Activated CD8-positive, alpha-beta memory T cell treated with anti-CD3 and anti-CD28 coated beads, Interleukin-2, amount 10 ng/mL, durations not matched to agents 7 days and 5 days (primary cell): ENCODE measurements at regions of chr11 and their contacts with region 1.

Region 1: GRCh38 chr11:11036848-11037732 is 179.2 kb upstream of the ZBED5 start:
- DNase-seq: no peak
- ATAC-seq: peak; percentile 70
- H3K4me3 Mint-ChIP-seq: no peak overlapping the region
- H3K27ac Mint-ChIP-seq: no peak overlapping the region
- H3K4me1 Mint-ChIP-seq: no peaks in the 10 kb centered on the region
- H3K27me3 Mint-ChIP-seq: peaks cover 11% of the 10 kb centered on the region

Region 2: GRCh38 chr11:11069841-11070835 is 33.0 kb after region 1 on chr11:
- CTCF ChIA-PET with region 1: no interaction called
- DNase-seq: no peak
- ATAC-seq: no peak
- H3K4me3 Mint-ChIP-seq: no peak overlapping the region
- H3K27ac Mint-ChIP-seq: no peak overlapping the region
- H3K4me1 Mint-ChIP-seq: no peaks in the 10 kb centered on the region
- H3K27me3 Mint-ChIP-seq: peaks cover 2% of the 10 kb centered on the region

Region 3: DNA sequence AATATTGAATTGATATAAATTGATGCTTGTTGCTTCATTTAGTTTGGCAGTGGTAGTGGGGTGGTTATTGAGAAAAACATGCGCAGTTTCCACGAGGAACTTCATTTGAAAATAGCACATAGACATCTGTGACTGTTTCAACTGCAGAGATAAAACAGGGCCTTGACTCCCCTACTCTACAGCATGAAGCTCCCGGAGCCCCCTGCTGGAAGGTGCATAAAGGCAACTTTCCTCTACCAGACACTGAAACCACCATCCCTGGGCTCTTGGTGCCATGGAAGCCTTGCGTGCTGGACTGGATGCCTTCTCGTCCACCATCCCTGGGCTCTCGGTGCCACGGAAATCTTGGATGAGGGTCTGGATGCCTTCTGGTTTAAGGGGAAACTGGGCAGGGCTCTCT is 120.1 kb after region 1 on chr11:
- CTCF ChIA-PET with region 1: interaction called, 17 read pairs
- DNase-seq: peak; percentile 54
- ATAC-seq: peak; percentile 39
- H3K4me3 Mint-ChIP-seq: no peak overlapping the region
- H3K27ac Mint-ChIP-seq: no peak overlapping the region
- H3K4me1 Mint-ChIP-seq: peaks cover 9% of the 10 kb centered on the region
- H3K27me3 Mint-ChIP-seq: no peaks in the 10 kb centered on the region